Dendritic cell treated with granulocyte-macrophage colony-stimulating factor and Interleukin-4, amounts not matched to agents 40 ng/mL and 50 ng/mL, for 4 days (primary cell): ENCODE measurements at regions of chr15 and their contacts with region 1.

Region 1: DNA sequence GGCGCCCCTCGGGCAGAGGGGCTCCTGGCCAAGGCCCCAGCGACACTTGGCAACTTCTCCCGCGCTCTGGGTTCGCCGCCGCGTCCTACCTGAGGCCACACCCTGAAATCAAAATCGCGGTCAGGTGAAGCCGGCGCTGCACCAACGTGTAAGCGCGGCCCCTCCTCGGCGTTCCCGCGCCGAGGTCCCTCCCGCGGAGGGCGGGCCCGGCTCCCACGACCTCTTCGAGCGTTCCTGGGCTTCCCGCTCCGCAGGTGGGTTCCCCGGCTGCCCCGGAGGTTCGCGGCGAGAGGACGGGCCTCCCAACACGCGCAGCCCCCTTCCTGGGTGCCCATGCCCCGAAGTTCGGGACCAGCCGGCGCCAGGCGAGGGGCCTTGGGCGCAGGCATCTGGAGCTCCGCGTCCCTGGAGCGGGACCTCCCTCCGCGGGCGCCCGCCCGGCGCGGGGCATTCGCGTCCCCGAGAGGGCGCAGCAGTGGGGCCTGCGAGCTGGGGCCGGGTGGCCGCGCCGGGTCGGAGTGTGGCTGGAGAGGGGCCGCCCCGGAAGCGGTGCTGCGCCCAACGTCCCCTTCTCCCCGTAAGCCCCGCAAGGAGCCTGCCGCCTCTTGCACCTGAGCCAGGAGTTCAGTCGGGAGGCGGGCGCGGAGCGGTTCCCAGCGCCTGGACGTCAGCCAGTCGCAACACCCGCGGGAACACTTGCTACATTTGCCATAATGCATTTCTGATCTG is 13.7 kb downstream of the PAK6 start:
- H3K4me3 Mint-ChIP-seq: peak overlapping the region; percentile 57
- H3K27ac Mint-ChIP-seq: no peak overlapping the region
- H3K4me1 Mint-ChIP-seq: peaks cover 7% of the 10 kb centered on the region
- H3K27me3 Mint-ChIP-seq: peaks cover 60% of the 10 kb centered on the region

Region 2: DNA sequence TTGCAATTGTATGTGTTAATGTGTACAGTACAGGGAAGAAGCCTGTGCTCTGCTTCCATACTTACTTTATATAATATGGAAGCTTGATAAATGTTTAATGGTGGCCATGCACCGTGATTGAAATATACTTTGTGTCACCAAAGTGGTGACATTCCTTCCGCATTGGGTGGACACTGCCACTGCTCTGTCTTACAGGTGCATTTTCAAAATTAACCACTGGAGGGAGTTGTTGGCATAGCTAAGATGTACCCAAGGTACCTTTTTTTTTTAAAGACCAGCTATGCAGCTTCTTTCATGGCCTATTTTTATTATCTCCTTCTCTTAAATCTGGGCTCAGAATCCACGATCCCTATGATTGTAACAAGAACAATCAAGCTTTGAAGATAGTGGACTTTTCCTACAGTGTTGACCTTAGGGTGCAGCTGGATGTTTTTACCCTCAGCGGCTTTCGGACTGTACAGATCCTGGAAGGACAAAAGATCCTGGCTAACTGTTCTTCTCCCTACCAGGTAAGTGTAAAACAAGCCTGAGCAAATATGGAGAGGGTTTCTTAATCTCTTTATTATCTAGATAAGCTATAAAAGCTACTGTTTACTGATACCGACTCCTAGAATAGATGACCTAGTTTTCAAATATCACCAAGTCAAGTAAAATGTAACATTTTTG is 35.3 kb before region 1 on chr15:
- intact Hi-C with region 1: loop called (anchors 1 kb)
- H3K4me3 Mint-ChIP-seq: no peak overlapping the region
- H3K27ac Mint-ChIP-seq: no peak overlapping the region
- H3K4me1 Mint-ChIP-seq: no peaks in the 10 kb centered on the region
- H3K27me3 Mint-ChIP-seq: no peaks in the 10 kb centered on the region